ENCODE measurements at regions of chr2 and their contacts with region 1.

Region 1: DNA sequence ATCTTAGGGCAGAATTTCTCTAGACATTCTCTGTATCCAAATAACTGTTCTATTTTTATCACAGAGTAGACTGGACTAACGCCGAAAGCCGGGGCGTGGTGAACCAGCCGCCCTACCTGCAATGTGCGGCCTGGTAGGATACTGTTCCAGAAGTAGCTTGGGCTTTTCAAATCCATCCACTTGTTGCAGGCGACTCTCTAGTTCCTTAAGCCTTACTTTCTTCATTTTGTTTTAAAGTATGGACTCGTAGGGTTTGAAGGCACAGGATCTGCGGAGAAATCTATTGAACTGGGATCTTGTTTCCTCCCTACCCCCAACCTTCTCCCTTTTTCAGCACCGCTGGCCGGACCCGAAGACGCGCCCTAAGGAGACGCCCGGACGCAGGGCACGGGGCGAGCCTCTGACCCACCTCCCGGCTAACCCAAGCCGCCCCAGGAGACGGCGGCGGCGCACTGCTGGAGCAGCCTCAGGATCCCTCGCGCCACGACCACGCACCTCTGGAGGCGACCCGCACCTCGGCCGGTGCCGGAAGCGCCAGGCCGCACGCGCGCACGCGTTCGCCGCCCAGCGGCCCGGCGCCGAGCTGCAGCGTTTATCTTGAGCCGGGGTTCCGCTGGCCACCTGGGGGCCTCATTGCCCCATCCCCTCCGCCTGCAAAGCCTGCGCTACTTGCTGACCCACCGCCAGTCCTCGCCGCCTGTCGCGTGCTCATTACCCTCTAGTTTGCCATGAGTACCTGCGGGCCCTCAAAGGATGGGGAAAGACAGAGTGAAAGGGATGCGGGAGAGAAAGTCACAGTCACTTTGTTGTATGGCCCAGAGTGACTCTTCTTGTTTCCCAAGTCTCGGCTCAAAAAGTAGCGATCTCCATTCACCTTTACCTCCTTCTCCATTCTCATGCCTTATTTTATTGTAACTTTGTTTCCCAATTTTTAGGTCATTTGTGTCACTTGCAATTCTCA is at the start of gene METTL5:
- DNase-seq: peak; percentile 92 to 96 (median 94)
- ATAC-seq: peak; percentile 72
- H3K4me3 ChIP-seq: peak within 1 kb of the TSS; percentile 65
- H3K27ac ChIP-seq: peak within 1 kb of the TSS; percentile 79
- H3K4me1 ChIP-seq: peaks cover 12 to 30% of the 10 kb centered on the region in 2 experiments; a peak in 4 of 5 replicates
- H3K27me3 ChIP-seq: no peaks in the 10 kb centered on the region
- CTCF ChIP-seq: peak; percentile 99 to 100 (median 100)
- EP300 ChIP-seq: peak; percentile 57
- POLR2A ChIP-seq: peak; percentile 91
- RAD21 ChIP-seq: peak; percentile 100
- polyA plus RNA-seq, gene METTL5: 366 to 471 TPM

Region 2: GRCh38 chr2:168935810-168936581 is 888.7 kb before region 1 on chr2:
- CTCF ChIA-PET with region 1: no interaction called
- POLR2A ChIA-PET with region 1: no interaction called
- in situ Hi-C with region 1: no loop called
- intact Hi-C with region 1: no loop called
- DNase-seq: peak; percentile 76 to 96 (median 85)
- ATAC-seq: peak; percentile 91
- H3K4me3 ChIP-seq: peak overlapping the region; percentile 1; the same call in 1 of the 2 replicates
- H3K27ac ChIP-seq: peak overlapping the region; percentile 78
- H3K4me1 ChIP-seq: peaks cover 5 to 53% of the 10 kb centered on the region in 2 experiments
- H3K27me3 ChIP-seq: no peaks in the 10 kb centered on the region
- CTCF ChIP-seq: peak in 1 of 3 experiments; percentile 8; a peak in 2 of 6 replicates
- EP300 ChIP-seq: peak; percentile 100
- POLR2A ChIP-seq: no peak
- RAD21 ChIP-seq: peak; percentile 34

Region 3: GRCh38 chr2:169452080-169452479 is 372.6 kb before region 1 on chr2:
- CTCF ChIA-PET with region 1: interaction called, 6 read pairs
- POLR2A ChIA-PET with region 1: no interaction called
- in situ Hi-C with region 1: no loop called
- intact Hi-C with region 1: loop called (anchors 2 kb)
- DNase-seq: peak; percentile 51 to 78 (median 58)
- ATAC-seq: peak; percentile 97
- H3K4me3 ChIP-seq: no peak overlapping the region
- H3K27ac ChIP-seq: no peak overlapping the region
- H3K4me1 ChIP-seq: no peaks in the 10 kb centered on the region; a peak in 1 of 5 replicates
- H3K27me3 ChIP-seq: no peaks in the 10 kb centered on the region
- CTCF ChIP-seq: peak; percentile 34 to 76 (median 49); a peak in 4 of 6 replicates
- EP300 ChIP-seq: no peak
- POLR2A ChIP-seq: no peak
- RAD21 ChIP-seq: peak; percentile 57 to 71

Region 4: GRCh38 chr2:169839954-169840746 is 15.5 kb after region 1 on chr2:
- CTCF ChIA-PET with region 1: no interaction called
- POLR2A ChIA-PET with region 1: interaction called, 71 read pairs
- in situ Hi-C with region 1: no loop called
- intact Hi-C with region 1: loop called (anchors 1 kb)
- DNase-seq: peak; percentile 56 to 95 (median 74)
- ATAC-seq: peak; percentile 95
- H3K4me3 ChIP-seq: peak overlapping the region; percentile 19; the same call in 1 of the 2 replicates
- H3K27ac ChIP-seq: peak overlapping the region; percentile 78
- H3K4me1 ChIP-seq: peaks cover 36 to 37% of the 10 kb centered on the region in 2 experiments
- H3K27me3 ChIP-seq: no peaks in the 10 kb centered on the region
- CTCF ChIP-seq: peak; percentile 25 to 27 (median 27); a peak in 2 of 6 replicates
- EP300 ChIP-seq: peak; percentile 82
- POLR2A ChIP-seq: 0 out of 2 replicates have a peak, but pooled peaks have one; percentile 10
- RAD21 ChIP-seq: peak in 1 of 2 experiments; percentile 45; a peak in 2 of 4 replicates

Region 5: GRCh38 chr2:169868951-169869350 is 44.3 kb after region 1 on chr2:
- CTCF ChIA-PET with region 1: no interaction called
- POLR2A ChIA-PET with region 1: interaction called, 8 read pairs
- in situ Hi-C with region 1: no loop called
- intact Hi-C with region 1: loop called (anchors 2 kb)
- DNase-seq: peak in 1 of 4 experiments; percentile 33
- ATAC-seq: peak; percentile 66
- H3K4me3 ChIP-seq: peak overlapping the region; percentile 22; the same call in 1 of the 2 replicates
- H3K27ac ChIP-seq: peak overlapping the region; percentile 83
- H3K4me1 ChIP-seq: peaks cover 3 to 6% of the 10 kb centered on the region in 2 experiments; a peak in 4 of 5 replicates
- H3K27me3 ChIP-seq: no peaks in the 10 kb centered on the region
- CTCF ChIP-seq: no peak
- EP300 ChIP-seq: no peak
- POLR2A ChIP-seq: no peak
- RAD21 ChIP-seq: no peak

Region 6: DNA sequence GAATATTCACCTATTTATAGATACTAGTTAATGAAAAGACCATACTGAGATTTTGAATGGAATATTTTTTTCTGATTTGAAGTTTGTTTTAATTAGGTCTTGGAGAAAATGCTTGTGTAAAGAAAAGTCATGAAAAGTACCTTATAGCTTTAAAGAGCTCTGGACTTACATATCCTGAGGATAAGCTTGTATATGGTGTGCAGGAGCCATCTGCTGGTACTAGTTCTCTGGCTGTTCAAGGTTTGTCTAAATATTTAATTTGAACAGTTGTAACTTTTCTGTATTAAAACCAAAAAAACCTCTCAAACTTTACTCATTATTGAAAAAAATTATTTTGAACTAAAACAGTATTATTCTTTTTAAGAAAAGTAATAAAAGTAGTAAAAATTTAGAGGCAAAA is 52.7 kb after region 1 on chr2:
- CTCF ChIA-PET with region 1: interaction called, 57 read pairs
- POLR2A ChIA-PET with region 1: interaction called, 16 read pairs
- in situ Hi-C with region 1: no loop called
- intact Hi-C with region 1: loop called (anchors 1 kb)
- DNase-seq: peak in 1 of 4 experiments; percentile 59
- ATAC-seq: peak; percentile 86
- H3K4me3 ChIP-seq: no peak overlapping the region
- H3K27ac ChIP-seq: no peak overlapping the region
- H3K4me1 ChIP-seq: no peaks in the 10 kb centered on the region
- H3K27me3 ChIP-seq: no peaks in the 10 kb centered on the region
- CTCF ChIP-seq: peak; percentile 53 to 79 (median 68); a peak in 5 of 6 replicates
- EP300 ChIP-seq: no peak
- POLR2A ChIP-seq: no peak
- RAD21 ChIP-seq: peak; percentile 71 to 91

Measured in K562 (cell line).